ENCODE measurements at regions of chr12 and their contacts with region 1.

Region 1: DNA sequence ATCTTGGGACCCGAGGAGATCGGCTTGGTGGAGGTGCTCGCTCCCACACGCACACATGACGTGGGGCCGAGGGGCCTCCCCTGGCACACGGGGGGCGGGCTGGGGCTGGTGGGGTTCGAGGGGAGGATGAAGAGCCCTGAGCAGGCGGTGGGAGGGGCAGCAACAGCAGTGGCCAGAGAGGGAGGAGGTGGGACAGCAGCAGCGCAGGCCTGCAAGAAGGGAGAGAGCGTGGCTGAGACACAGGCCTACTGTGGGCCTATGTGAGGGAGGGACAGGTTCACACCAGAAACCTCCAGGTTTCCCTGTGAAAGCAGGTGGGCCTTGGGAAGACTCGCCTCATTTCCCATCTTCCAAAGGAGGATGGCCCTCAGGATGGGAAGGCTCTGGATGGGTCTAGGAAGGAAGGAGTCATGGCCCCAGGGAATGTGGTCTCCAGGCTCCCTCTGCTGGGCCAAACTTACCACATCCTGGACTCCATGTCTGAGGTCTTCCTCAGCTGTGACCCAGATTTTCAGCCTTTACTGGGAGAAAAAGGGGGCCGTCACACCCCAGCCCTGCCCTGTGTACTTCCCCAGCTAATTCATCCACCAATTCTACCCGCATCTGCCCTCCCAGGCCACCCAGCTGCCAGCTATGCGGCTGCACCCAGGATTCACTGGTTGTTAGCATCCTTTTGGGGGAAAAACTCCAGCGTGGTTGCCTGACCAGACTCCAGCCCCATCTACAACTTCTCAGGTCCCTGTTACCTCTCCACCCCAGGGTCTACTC is 2.8 kb downstream of the PIANP start:
- DNase-seq: peak; percentile 48
- H3K4me3 ChIP-seq: no peak overlapping the region
- H3K27ac ChIP-seq: no peak overlapping the region
- H3K4me1 ChIP-seq: peaks cover 4% of the 10 kb centered on the region
- H3K27me3 ChIP-seq: peaks cover 21% of the 10 kb centered on the region
- CTCF ChIP-seq: peak; percentile 55 to 57

Region 2: DNA sequence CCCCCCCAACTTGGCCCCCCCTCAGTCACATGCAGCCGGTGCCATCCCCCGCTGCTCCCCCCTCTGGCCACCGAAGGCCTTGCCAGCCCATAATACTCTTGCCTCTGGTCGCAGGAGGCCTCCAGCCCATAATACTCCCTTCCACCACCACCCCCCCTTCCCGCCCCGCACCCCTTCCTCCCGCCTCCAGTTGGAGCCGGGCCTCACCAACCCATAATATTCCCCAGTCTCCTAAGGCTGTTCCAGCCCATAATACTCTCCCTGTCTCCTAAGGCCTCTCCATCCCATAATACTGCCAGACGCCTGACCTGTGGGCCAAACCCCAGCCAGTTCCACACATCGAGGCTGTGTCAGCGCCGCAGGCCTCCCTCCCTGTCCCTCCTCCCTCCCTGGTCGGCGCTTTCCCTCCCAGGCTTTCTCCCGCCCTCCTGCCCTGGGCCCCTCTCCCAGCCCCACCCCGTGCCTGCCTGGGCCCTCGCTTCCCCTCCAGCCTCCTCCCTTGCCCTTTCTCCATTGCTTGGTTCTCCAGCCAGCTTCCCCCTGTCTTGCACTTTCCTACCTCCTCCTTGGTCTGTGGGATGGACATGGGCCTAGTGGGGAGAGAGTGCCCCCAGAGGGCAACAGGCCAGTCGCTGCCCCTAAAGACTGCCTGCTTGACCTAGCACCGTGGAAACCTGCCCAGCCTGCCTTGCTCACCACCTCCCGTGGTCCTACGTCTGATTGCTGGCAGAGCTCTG is 83.8 kb before region 1 on chr12:
- CTCF ChIA-PET with region 1: no interaction called
- dilution Hi-C with region 1: no loop called
- in situ Hi-C with region 1: no loop called
- intact Hi-C with region 1: loop called (anchors 1 kb)
- DNase-seq: peak; percentile 65
- H3K4me3 ChIP-seq: no peak overlapping the region
- H3K27ac ChIP-seq: no peak overlapping the region
- H3K4me1 ChIP-seq: peaks cover 17% of the 10 kb centered on the region
- H3K27me3 ChIP-seq: no peaks in the 10 kb centered on the region
- CTCF ChIP-seq: no peak

Region 3: DNA sequence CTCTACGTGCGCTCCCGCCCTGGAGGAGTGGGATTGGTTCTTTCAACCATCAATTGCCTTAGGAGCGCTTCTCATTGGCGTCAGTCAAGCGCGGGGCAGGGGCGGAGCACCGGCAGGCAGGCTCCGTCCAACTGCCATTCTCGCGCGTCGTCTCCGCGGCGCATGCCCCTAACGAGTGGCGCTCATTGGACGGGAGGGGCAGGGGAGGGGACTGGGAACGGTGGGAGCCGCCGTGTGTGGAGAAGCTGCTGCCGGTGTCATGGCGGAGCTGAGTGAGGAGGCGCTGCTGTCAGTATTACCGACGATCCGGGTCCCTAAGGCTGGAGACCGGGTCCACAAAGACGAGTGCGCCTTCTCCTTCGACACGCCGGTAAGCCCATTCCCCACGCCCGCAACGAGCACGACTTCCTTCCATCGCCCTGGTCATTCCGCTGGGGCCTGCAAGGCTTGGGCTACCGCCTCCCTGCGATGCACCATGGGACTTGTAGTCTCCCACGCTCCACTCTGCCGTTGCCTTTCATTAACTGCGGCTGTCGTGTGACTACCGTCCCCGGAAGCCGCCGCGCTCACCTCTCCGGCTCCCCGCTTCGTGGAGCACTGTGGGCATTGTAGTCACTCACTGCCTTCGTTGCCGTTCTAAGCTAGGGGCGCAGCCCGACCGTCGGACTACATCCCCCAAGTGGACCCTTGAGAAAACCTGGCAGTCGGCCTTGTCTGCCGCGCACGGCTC is 154.3 kb after region 1 on chr12 and contains the start of gene USP5:
- CTCF ChIA-PET with region 1: no interaction called
- dilution Hi-C with region 1: no loop called
- in situ Hi-C with region 1: no loop called
- intact Hi-C with region 1: no loop called
- DNase-seq: peak; percentile 100
- H3K4me3 ChIP-seq: peak within 1 kb of the TSS; percentile 65 to 84 (median 78)
- H3K27ac ChIP-seq: peak within 1 kb of the TSS; percentile 84
- H3K4me1 ChIP-seq: peaks cover 20% of the 10 kb centered on the region
- H3K27me3 ChIP-seq: no peaks in the 10 kb centered on the region
- CTCF ChIP-seq: no peak
- total RNA-seq, gene USP5: 79.4 to 128 TPM